Activated T-helper 1 cell treated with anti-CD3 and anti-CD28 coated beads, Interleukin-12 subunit alpha, Interleukin-12 subunit beta, Interleukin-2, Interleukin-4 antibody, amounts not matched to agents 30 ng/mL and 10 ng/mL and 1 ng/mL, durations not matched to agents 14 hours and 24 hours and 36 hours (primary cell): ENCODE measurements at regions of chr14 and their contacts with region 1.

Region 1: DNA sequence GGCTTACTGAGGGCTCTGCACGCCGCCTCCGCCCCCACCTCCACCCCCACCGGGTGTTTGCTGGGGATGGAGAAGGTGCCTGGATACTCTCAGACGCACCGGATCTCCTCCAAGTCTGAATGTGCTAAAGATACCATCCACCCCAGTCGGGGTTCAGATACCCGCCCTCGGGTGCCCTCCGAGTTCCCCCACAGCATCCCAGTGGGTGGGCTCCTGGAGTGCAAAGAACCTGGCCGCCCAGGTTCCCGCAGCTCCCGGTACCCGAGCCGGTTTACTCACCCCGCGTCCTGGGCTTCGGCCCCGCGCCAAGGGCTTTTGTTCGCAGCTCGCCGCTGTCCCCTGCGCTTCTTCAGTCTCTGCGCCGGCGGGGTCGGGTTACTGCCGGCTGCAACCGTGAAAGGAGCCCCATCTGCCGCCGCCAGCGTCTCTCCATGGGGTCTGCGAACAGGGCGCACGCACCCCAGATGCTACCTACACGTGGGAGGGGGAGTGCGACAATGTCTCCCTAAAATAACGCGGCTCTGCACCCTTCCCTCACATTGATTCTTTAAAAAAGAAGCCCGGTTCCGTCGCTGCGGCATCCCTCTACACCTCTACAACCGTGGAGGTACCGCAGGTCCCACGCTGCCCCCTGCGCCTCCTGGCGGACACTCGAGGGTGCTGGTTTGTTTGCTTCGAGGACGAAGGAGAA is at the start of gene CCDC177:
- DNase-seq: peak; percentile 57
- H3K4me3 Mint-ChIP-seq: peak within 1 kb of the TSS; percentile 78
- H3K27ac Mint-ChIP-seq: no peak within 1 kb of the TSS
- H3K4me1 Mint-ChIP-seq: peaks cover 10% of the 10 kb centered on the region
- H3K27me3 Mint-ChIP-seq: peaks cover 58% of the 10 kb centered on the region
- total RNA-seq, gene CCDC177: 0.08 TPM in 1 of 2 replicates, not detected in the other

Region 2: DNA sequence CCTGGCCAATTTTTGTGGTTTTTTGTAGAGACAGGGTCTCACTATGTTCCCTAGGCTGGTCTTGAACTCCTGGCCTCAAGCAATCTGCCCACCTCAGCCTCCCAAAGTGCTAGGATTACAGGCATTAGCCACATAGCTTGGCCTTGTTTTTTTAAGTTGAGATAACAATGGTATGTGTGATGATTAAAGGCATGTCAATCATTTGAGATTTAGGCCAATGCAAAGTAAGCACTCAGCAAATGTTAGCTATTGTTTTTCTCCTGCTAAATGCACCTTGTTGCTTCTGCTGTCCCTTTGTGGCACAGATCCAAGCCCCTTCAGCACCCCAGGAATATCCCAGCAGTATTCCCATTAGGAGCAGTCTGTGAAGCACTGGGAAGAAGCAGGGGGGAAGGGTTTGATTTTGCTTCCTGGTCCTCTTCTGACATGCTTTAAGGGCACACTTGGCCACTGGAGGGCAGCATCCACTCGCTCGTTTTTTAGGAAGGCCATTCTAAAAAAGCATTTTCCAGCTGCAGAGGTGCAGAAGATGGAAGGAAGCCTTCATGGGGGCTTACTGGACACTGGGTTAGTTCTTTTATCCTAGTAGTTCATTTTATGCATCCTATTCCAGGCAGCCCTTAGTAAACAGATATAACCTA is 711.3 kb before region 1 on chr14:
- intact Hi-C with region 1: loop called (anchors 10 kb)
- DNase-seq: peak; percentile 44
- H3K4me3 Mint-ChIP-seq: no peak overlapping the region
- H3K27ac Mint-ChIP-seq: no peak overlapping the region
- H3K4me1 Mint-ChIP-seq: no peaks in the 10 kb centered on the region
- H3K27me3 Mint-ChIP-seq: peaks cover 3% of the 10 kb centered on the region

Region 3: DNA sequence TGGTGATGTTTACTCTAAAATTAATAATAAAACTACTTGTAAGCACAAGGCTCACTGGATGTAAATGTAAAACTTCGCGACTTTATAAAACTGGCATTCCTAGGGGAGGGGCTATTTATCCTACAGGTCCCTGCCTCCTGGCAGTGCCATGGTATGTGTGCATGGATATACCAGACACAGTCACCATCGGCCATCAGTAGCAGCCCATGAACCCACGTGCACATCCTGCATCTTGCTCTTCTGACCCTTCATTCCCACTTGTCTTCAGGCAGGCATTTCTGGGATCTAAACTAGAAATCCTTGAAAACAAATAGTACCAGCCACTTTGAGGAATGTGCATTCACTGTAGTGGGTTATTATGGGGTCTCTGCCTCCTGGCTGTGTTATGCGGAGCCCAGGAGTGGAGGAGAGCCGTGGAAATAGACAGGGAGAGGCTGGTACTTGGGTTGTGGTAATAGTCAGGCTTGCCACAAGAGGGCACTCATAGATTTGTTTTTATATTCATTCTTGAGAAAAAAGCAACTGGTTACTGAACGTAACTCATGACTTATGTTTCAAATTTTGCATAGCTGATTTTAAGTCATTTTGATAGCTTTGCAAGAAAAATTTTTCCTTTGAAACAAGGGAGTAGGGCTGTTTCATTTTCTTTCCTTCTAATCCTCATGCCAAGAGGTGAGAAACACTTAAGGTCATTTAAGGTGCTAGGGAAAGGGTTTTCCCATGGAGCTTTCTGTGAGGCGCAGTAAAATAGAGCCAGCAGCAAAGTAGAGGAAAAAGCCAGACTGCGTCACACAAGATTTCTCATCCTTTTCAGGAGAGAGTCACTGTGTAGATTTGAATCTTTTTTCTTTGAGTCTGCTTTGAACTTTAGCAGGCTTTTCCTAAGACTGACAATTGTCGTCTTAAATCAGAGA is 331.8 kb before region 1 on chr14:
- intact Hi-C with region 1: loop called (anchors 1 kb)
- DNase-seq: peak; percentile 27
- H3K4me3 Mint-ChIP-seq: no peak overlapping the region
- H3K27ac Mint-ChIP-seq: no peak overlapping the region
- H3K4me1 Mint-ChIP-seq: no peaks in the 10 kb centered on the region
- H3K27me3 Mint-ChIP-seq: peaks cover 2% of the 10 kb centered on the region

Region 4: DNA sequence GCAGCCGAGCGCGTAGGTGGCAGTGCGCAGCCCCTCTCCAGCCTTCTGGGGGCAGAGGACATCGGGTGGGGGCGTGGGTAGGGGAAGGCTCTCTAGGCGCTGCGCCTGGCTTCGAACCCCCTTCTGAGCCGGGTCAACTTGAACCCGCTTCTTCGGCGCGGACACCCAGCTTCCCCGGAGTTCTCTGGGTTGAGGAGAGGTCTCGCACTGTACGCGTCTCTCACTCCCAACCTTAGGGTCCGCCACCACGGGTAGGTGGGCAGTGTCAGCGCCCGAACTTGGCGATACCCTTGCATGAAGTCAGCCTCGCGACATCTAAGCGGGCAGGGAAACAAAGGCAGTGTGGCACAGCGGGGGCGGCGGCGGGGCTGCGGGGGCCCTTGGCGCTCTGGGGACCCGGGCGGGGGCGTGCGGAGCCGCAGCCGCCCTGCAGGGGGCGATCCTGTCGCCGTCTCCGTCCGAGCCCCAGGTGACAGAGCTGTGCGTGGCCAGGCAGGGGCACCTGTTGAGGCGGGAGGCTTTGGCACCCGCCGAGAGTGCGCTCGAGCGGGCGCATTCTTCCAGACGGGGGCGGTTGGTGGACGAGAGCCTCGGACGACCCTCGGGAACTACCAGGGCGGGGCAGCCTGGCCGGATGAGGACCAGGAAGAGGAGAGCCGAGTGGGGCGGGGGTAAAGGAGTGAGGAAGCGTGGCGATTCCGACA is 313.4 kb before region 1 on chr14:
- intact Hi-C with region 1: loop called (anchors 5 kb)
- DNase-seq: peak; percentile 16
- H3K4me3 Mint-ChIP-seq: peak overlapping the region; percentile 65
- H3K27ac Mint-ChIP-seq: no peak overlapping the region
- H3K4me1 Mint-ChIP-seq: peaks cover 6% of the 10 kb centered on the region
- H3K27me3 Mint-ChIP-seq: peaks cover 52% of the 10 kb centered on the region

Region 5: DNA sequence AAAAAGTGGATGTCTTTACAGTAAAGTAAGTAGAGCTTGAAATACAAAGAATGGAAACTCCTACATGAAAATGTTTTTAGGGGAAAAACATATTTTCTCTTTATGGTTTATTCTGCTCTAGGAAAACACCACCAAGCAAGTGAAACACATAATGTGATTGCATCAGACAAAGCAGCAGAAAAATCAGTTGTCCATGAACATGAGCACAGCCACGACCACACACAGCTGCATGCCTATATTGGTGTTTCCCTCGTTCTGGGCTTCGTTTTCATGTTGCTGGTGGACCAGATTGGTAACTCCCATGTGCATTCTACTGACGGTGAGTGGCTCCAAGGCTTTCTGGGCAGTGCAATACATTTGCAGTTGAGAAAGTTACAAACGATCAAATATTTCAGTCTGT is 132.5 kb before region 1 on chr14:
- intact Hi-C with region 1: no loop called
- DNase-seq: no peak
- H3K4me3 Mint-ChIP-seq: peak overlapping the region; percentile 4
- H3K27ac Mint-ChIP-seq: peak overlapping the region; percentile 18
- H3K4me1 Mint-ChIP-seq: peaks cover 18% of the 10 kb centered on the region
- H3K27me3 Mint-ChIP-seq: no peaks in the 10 kb centered on the region

Region 6: GRCh38 chr14:69483765-69484443 is 90.5 kb before region 1 on chr14:
- intact Hi-C with region 1: no loop called
- DNase-seq: no peak
- H3K4me3 Mint-ChIP-seq: no peak overlapping the region
- H3K27ac Mint-ChIP-seq: no peak overlapping the region
- H3K4me1 Mint-ChIP-seq: no peaks in the 10 kb centered on the region
- H3K27me3 Mint-ChIP-seq: peaks cover 38% of the 10 kb centered on the region

Region 7: DNA sequence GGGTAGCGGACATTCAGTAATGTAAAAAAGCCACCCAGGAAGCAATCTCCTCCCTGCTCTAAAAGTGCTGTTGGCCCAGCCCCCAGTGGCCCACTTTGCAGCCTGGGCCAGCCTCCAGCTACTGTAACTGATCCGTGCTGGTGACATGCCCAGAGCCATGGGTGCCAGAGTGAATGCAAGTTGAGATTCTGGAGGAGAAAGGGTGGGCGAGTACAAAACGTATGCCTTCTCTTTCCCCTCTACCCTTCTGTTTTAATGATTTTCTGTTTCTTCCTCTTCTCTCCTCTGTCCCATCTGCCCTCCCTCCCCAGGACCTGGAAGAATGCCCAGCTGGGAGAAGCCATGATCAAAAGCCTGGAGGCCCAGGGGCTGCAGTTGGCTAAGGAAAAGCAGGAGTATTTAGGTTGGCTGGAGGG is 73.0 kb before region 1 on chr14:
- intact Hi-C with region 1: loop called (anchors 1 kb)
- DNase-seq: no peak
- H3K4me3 Mint-ChIP-seq: no peak overlapping the region
- H3K27ac Mint-ChIP-seq: no peak overlapping the region
- H3K4me1 Mint-ChIP-seq: no peaks in the 10 kb centered on the region
- H3K27me3 Mint-ChIP-seq: peaks cover 5% of the 10 kb centered on the region

Region 8: GRCh38 chr14:69535230-69535848 is 39.1 kb before region 1 on chr14:
- intact Hi-C with region 1: no loop called
- DNase-seq: no peak
- H3K4me3 Mint-ChIP-seq: no peak overlapping the region
- H3K27ac Mint-ChIP-seq: no peak overlapping the region
- H3K4me1 Mint-ChIP-seq: no peaks in the 10 kb centered on the region
- H3K27me3 Mint-ChIP-seq: peaks cover 24% of the 10 kb centered on the region